Left ventricle myocardium superior (tissue), 1 donor: ENCODE measurements at regions of chr4 and their contacts with region 1.

Region 1: GRCh38 chr4:123776254-123776653 is 379.7 kb downstream of the SPRY1 start:
- DNase-seq: no peak
- ATAC-seq: no peak

Region 2: DNA sequence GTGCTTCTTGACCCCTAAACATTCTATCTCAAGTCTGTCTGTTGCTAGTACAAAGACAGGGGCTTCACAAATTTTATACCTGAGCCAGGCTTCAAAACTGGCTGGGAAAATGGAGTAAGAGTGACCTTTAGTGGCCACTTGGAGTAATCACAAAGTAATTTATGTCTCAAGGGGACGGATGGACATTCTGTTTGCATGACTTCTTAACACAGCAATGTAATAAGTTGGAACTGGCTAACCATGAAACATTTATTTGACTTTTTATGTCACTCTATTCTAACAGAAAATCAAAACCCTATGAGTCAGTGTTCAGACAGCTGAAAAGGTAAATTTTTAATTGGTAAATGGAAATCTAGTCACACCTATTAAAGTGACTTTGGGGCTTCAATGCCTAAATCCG is 335.7 kb after region 1 on chr4:
- intact Hi-C with region 1: loop called (anchors 10 kb)
- DNase-seq: no peak
- ATAC-seq: peak; percentile 93